HEK293 (cell line): ENCODE measurements at regions of chr6 and their contacts with region 1.

Region 1: GRCh38 chr6:27893059-27893835 is 18.9 kb downstream of the OR2B2 start:
- H3K4me3 ChIP-seq: peak overlapping the region; percentile 56
- H3K27ac ChIP-seq: peak overlapping the region; percentile 67; the same call in 1 of the 2 replicates
- H3K4me1 ChIP-seq: no peaks in the 10 kb centered on the region
- CTCF ChIP-seq: no peak

Region 2: DNA sequence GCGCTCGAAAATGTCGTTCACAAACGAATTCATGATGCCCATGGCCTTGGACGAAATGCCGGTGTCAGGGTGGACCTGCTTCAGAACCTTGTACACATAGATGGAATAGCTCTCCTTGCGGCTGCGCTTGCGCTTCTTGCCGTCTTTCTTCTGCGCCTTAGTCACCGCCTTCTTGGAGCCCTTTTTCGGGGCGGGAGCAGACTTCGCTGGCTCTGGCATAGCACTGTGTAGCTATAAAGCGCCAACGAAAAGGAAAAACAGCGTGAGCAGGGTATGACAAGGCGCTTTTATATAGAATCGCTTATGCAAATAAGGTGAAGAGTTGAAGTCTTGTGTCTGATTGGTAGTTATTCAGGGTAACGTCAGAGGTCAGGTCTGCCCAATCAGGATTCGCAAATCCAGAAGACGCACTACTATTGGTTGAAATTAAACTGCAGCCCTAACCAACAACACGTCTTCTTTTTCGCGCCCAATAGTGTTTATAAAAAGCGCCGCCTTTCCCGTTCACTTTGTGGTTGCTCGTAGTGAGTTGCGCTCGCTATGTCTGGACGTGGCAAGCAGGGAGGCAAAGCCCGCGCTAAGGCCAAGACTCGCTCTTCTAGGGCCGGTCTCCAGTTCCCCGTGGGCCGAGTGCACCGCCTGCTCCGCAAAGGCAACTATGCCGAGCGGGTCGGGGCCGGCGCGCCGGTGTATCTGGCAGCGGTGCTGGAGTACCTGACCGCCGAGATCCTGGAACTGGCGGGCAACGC is 760.5 kb before region 1 on chr6:
- CTCF ChIA-PET with region 1: no interaction called
- POLR2A ChIA-PET with region 1: interaction called, 21 read pairs
- H3K4me3 ChIP-seq: peak overlapping the region; percentile 71
- H3K27ac ChIP-seq: peak overlapping the region; percentile 95
- H3K4me1 ChIP-seq: peaks cover 10% of the 10 kb centered on the region
- CTCF ChIP-seq: no peak

Region 3: GRCh38 chr6:27642744-27643456 is 250.3 kb before region 1 on chr6:
- CTCF ChIA-PET with region 1: no interaction called
- POLR2A ChIA-PET with region 1: no interaction called
- H3K4me3 ChIP-seq: no peak overlapping the region
- H3K27ac ChIP-seq: no peak overlapping the region
- H3K4me1 ChIP-seq: no peaks in the 10 kb centered on the region
- CTCF ChIP-seq: no peak

Region 4: DNA sequence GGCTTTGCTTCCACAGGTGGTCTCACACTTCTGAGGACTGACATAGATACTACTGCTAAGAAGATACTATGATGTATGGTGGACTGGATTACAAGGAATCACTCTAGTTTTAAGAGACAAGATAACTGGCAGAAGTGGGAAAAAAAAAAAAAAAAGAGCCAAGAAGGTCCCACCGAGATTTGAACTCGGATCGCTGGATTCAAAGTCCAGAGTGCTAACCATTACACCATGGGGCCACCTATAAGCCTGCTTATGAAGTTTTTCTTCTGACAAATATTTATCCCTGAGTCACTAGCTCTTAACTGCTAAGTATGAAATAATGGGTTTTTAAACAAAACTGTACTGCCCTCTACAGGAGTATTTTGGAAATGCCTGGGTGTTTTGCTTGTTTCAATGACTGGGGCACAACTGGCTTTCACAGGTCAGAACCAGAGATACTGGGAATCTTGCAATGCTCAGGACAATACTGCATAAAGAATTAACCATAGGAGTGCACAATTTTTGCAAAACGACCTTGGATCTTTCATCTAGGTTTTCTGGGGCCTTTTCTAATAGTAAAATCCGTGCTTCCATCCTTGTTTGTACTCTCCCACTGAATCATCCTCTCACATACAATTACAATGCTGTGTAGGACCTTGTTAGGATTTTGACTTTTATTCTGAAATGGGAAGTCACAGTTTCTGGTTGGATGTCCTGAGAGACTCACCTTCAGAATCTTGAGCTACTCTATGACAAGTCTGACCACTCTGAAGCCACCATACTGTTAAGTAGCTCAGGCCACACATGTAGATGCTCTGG is 97.4 kb before region 1 on chr6:
- CTCF ChIA-PET with region 1: interaction called, 37 read pairs
- POLR2A ChIA-PET with region 1: interaction called, 3 read pairs
- H3K4me3 ChIP-seq: no peak overlapping the region
- H3K27ac ChIP-seq: no peak overlapping the region
- H3K4me1 ChIP-seq: no peaks in the 10 kb centered on the region
- CTCF ChIP-seq: peak; percentile 74

Region 5: GRCh38 chr6:27838058-27838944 is 54.9 kb before region 1 on chr6:
- CTCF ChIA-PET with region 1: interaction called, 38 read pairs
- POLR2A ChIA-PET with region 1: interaction called, 202 read pairs
- H3K4me3 ChIP-seq: peak overlapping the region; percentile 65
- H3K27ac ChIP-seq: peak overlapping the region; percentile 90
- H3K4me1 ChIP-seq: no peaks in the 10 kb centered on the region
- CTCF ChIP-seq: no peak; the same call in 1 of the 2 replicates

Region 6: DNA sequence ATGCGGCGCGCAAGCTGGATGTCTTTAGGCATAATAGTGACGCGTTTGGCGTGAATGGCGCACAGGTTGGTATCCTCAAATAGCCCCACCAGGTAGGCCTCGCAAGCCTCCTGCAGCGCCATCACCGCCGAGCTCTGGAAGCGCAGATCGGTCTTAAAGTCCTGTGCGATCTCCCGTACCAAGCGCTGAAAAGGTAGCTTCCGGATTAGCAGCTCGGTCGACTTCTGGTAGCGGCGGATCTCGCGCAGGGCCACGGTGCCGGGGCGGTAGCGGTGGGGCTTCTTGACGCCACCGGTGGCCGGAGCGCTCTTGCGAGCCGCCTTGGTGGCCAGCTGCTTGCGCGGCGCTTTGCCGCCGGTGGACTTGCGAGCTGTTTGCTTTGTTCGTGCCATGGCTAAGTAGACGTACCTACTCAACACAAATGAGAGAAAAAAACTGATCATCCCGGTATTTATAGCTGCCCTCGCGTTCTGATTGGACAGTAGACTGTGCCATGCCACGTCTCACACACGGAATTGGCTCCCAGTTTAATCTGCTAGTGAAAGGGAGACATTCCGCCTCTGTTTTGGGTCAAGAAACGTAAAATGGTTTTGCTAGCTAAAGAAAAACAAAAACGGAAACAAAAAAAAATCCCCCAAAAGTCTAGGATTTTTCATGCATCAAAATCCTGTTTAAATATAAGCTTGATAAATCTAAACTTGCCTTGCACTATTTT is 21.2 kb before region 1 on chr6:
- CTCF ChIA-PET with region 1: interaction called, 7 read pairs
- POLR2A ChIA-PET with region 1: interaction called, 110 read pairs
- H3K4me3 ChIP-seq: peak overlapping the region; percentile 41
- H3K27ac ChIP-seq: 0 out of 2 replicates have a peak overlapping the region, but pooled peaks have one; percentile 13
- H3K4me1 ChIP-seq: no peaks in the 10 kb centered on the region
- CTCF ChIP-seq: no peak

Region 7: GRCh38 chr6:28005124-28005890 is 112.1 kb after region 1 on chr6:
- CTCF ChIA-PET with region 1: no interaction called
- POLR2A ChIA-PET with region 1: no interaction called
- H3K4me3 ChIP-seq: no peak overlapping the region
- H3K27ac ChIP-seq: no peak overlapping the region
- H3K4me1 ChIP-seq: no peaks in the 10 kb centered on the region
- CTCF ChIP-seq: no peak

Region 8: GRCh38 chr6:28355743-28356665 is 462.8 kb after region 1 on chr6:
- CTCF ChIA-PET with region 1: interaction called, 12 read pairs
- POLR2A ChIA-PET with region 1: interaction called, 5 read pairs
- H3K4me3 ChIP-seq: peak overlapping the region; percentile 63
- H3K27ac ChIP-seq: peak overlapping the region; percentile 4; the same call in 1 of the 2 replicates
- H3K4me1 ChIP-seq: peaks cover 3% of the 10 kb centered on the region; the same call in 1 of the 2 replicates
- CTCF ChIP-seq: peak; percentile 50; the same call in 1 of the 2 replicates